ENCODE measurements at regions of chr18 and their contacts with region 1.

Region 1: DNA sequence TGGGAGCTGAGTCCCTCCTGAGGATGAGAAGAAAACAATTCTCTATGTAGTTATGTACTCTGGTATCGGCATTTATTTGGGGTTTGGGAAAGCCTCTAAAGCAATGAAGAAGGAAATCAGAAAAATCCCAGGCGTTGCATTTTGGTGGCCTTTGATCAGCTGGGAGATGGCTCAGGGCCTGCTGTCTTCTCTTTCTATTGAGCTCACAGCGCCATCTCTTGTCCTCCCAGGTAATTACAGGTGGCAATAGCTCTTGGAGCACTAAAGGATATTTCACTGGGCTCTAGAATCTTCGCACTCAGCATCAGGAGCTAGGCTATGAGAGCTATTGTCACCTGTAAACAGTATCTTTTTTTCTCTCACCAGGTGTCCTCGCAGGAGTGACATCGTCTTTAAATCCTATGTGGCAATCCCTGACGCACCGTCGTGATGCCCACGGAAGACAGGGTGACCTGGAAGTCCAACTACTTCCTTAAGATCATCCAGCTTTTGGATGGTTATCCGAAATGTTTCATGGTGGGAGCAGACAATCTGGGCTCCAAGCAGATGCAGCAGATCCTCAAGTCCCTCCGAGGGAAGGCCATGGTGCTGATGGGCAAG is 76.1 kb upstream of the PMAIP1 start:
- DNase-seq: peak; percentile 83
- H3K4me3 Mint-ChIP-seq: no peak overlapping the region
- H3K27ac Mint-ChIP-seq: no peak overlapping the region
- H3K4me1 Mint-ChIP-seq: peaks cover 4% of the 10 kb centered on the region
- H3K27me3 Mint-ChIP-seq: no peaks in the 10 kb centered on the region
- CTCF ChIP-seq: peak; percentile 87

Region 2: DNA sequence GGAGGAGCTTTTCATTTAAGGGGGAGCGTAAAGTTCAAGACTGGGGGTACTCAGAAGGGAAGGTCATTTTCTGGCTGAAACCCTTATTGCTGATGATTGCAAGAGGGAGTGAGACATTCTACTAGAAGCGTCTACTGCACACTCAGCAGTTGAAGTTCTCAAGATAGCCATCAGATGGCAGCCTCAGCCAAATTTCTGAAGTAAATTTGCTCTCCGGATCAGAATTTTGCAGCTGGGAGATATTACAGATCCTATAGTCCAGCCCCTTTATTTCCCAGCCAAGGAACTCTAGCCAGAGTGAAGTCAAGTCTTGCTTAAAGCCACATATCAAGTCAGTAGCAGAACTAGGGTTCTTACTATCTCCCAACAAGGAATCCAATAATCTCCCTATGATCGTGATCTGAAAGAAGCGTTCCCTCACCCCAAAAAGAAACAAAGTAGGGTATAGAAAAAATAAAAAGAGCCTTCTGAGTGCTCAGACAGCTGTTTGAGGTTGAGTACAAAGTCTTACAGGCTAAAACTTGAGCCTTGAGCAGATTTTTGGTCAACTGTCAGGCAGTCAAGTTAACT is 574.4 kb before region 1 on chr18:
- CTCF ChIA-PET with region 1: interaction called, 7 read pairs
- POLR2A ChIA-PET with region 1: no interaction called
- intact Hi-C with region 1: loop called (anchors 2 kb)
- DNase-seq: peak; percentile 60
- H3K4me3 Mint-ChIP-seq: no peak overlapping the region
- H3K27ac Mint-ChIP-seq: no peak overlapping the region
- H3K4me1 Mint-ChIP-seq: no peaks in the 10 kb centered on the region
- H3K27me3 Mint-ChIP-seq: peaks cover 76% of the 10 kb centered on the region
- CTCF ChIP-seq: peak; percentile 93

Region 3: GRCh38 chr18:59459369-59460079 is 364.2 kb before region 1 on chr18:
- CTCF ChIA-PET with region 1: interaction called, 310 read pairs
- POLR2A ChIA-PET with region 1: interaction called, 24 read pairs
- intact Hi-C with region 1: loop called (anchors 1 kb)
- DNase-seq: peak; percentile 51
- H3K4me3 Mint-ChIP-seq: no peak overlapping the region
- H3K27ac Mint-ChIP-seq: no peak overlapping the region
- H3K4me1 Mint-ChIP-seq: peaks cover 5% of the 10 kb centered on the region
- H3K27me3 Mint-ChIP-seq: no peaks in the 10 kb centered on the region
- CTCF ChIP-seq: peak; percentile 54

Region 4: GRCh38 chr18:59631583-59632181 is 192.0 kb before region 1 on chr18:
- CTCF ChIA-PET with region 1: interaction called, 227 read pairs
- POLR2A ChIA-PET with region 1: interaction called, 5 read pairs
- intact Hi-C with region 1: loop called (anchors 1 kb)
- DNase-seq: peak; percentile 48
- H3K4me3 Mint-ChIP-seq: no peak overlapping the region
- H3K27ac Mint-ChIP-seq: no peak overlapping the region
- H3K4me1 Mint-ChIP-seq: no peaks in the 10 kb centered on the region
- H3K27me3 Mint-ChIP-seq: peaks cover 14% of the 10 kb centered on the region
- CTCF ChIP-seq: peak; percentile 78

Region 5: DNA sequence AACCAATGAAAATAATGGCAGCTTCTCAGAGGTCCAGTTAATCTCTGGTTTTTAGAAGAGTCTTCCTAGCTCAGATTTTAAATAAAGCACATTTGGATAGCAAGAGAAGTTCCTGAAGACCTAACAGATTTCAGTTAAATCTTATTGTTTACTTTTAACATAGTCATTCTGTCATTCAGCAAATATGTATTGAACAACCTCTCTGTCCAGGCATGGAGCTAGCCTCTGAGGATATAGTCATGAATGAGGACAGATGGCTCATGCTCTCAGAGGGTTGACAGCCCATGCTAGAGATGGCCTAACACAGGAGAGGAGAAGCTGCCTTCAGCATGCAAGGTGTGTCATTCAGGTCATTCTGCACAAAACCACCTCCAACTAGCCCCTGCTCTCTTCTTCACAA is 132.7 kb before region 1 on chr18:
- CTCF ChIA-PET with region 1: interaction called, 76 read pairs
- POLR2A ChIA-PET with region 1: interaction called, 17 read pairs
- intact Hi-C with region 1: no loop called
- DNase-seq: peak; percentile 89
- H3K4me3 Mint-ChIP-seq: no peak overlapping the region
- H3K27ac Mint-ChIP-seq: peak overlapping the region; percentile 35
- H3K4me1 Mint-ChIP-seq: peaks cover 16% of the 10 kb centered on the region
- H3K27me3 Mint-ChIP-seq: no peaks in the 10 kb centered on the region
- CTCF ChIP-seq: no peak

Region 6: DNA sequence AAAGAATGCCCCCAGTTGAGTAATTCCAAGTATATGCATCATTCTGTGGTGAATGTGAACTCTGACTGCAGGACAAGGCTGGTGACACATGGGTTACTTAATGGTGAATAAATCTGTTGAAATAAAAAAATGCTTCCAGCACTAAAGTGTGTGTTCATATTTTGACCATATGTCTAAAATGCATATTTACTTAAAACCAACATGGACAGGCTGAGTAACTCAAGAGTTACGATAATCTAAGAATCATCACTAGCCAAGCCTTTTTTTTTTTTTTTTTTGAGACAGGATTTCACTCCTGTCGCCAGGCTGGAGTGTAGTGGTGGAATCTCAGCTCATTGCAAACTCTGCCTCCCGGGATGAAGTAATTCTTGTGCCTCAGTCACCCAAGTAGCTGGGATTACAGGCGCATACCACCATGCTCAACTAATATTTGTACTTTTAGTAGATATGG is 79.4 kb before region 1 on chr18:
- CTCF ChIA-PET with region 1: interaction called, 16 read pairs
- POLR2A ChIA-PET with region 1: no interaction called
- intact Hi-C with region 1: loop called (anchors 10 kb)
- DNase-seq: peak; percentile 86
- H3K4me3 Mint-ChIP-seq: no peak overlapping the region
- H3K27ac Mint-ChIP-seq: peak overlapping the region; percentile 74
- H3K4me1 Mint-ChIP-seq: peaks cover 24% of the 10 kb centered on the region
- H3K27me3 Mint-ChIP-seq: no peaks in the 10 kb centered on the region
- CTCF ChIP-seq: no peak

Region 7: GRCh38 chr18:59802031-59802430 is 21.7 kb before region 1 on chr18:
- CTCF ChIA-PET with region 1: interaction called, 42 read pairs
- POLR2A ChIA-PET with region 1: no interaction called
- intact Hi-C with region 1: no loop called
- DNase-seq: no peak
- H3K4me3 Mint-ChIP-seq: no peak overlapping the region
- H3K27ac Mint-ChIP-seq: no peak overlapping the region
- H3K4me1 Mint-ChIP-seq: no peaks in the 10 kb centered on the region
- H3K27me3 Mint-ChIP-seq: no peaks in the 10 kb centered on the region
- CTCF ChIP-seq: no peak